Calu3 (cell line): ENCODE measurements at regions of chr11 and their contacts with region 1.

Region 1: GRCh38 chr11:37504060-37504611 is 906.1 kb upstream of the RAG2 start:
- DNase-seq: peak; percentile 62
- H3K4me3 Mint-ChIP-seq: peak overlapping the region; percentile 0
- H3K27ac Mint-ChIP-seq: peak overlapping the region; percentile 16
- H3K4me1 Mint-ChIP-seq: peaks cover 51% of the 10 kb centered on the region
- H3K27me3 Mint-ChIP-seq: no peaks in the 10 kb centered on the region
- CTCF ChIP-seq: no peak

Region 2: DNA sequence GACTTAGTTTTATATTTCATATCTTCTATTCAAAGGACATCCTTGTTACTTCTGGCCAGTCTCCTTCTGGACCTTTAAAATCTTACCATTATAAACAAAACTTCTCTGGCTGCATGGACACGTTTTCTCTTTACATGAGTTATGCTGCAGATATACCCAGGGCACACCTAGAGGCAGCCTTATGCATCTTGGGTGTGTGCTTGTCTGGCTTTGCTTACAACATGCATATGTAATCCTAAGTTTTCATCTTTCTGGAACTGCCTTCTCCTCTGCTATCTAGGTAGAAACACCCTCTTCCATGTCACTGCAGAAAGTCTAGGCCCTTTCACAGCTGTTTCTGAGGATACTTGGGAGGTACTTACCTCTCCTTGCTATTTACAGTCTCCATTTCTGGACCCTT is 720.3 kb before region 1 on chr11:
- CTCF ChIA-PET with region 1: interaction called, 18 read pairs
- intact Hi-C with region 1: no loop called
- DNase-seq: no peak
- H3K4me3 Mint-ChIP-seq: no peak overlapping the region
- H3K27ac Mint-ChIP-seq: no peak overlapping the region
- H3K4me1 Mint-ChIP-seq: no peaks in the 10 kb centered on the region
- H3K27me3 Mint-ChIP-seq: peaks cover 28% of the 10 kb centered on the region
- CTCF ChIP-seq: no peak

Region 3: DNA sequence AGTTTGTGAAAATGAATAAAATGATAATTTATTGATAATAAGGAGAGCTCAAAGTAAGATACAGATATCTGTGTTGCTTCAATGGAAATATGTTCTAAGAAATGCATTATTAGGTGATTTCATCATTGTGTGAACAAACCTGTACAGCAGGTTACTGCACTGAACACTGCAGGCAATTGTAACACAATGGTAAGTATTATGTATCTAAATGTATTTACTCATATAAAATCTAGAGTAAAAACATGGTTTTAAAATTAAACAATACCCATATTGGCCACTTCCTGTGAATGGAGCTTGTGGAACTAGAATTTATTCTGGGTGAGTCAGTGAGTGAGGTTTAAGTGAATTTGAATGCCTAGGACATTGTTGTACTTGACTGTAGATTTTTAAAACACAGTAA is 183.2 kb before region 1 on chr11:
- CTCF ChIA-PET with region 1: no interaction called
- intact Hi-C with region 1: loop called (anchors 10 kb)
- DNase-seq: peak; percentile 36
- H3K4me3 Mint-ChIP-seq: no peak overlapping the region
- H3K27ac Mint-ChIP-seq: peak overlapping the region; percentile 75
- H3K4me1 Mint-ChIP-seq: peaks cover 39% of the 10 kb centered on the region
- H3K27me3 Mint-ChIP-seq: no peaks in the 10 kb centered on the region
- CTCF ChIP-seq: no peak

Region 4: DNA sequence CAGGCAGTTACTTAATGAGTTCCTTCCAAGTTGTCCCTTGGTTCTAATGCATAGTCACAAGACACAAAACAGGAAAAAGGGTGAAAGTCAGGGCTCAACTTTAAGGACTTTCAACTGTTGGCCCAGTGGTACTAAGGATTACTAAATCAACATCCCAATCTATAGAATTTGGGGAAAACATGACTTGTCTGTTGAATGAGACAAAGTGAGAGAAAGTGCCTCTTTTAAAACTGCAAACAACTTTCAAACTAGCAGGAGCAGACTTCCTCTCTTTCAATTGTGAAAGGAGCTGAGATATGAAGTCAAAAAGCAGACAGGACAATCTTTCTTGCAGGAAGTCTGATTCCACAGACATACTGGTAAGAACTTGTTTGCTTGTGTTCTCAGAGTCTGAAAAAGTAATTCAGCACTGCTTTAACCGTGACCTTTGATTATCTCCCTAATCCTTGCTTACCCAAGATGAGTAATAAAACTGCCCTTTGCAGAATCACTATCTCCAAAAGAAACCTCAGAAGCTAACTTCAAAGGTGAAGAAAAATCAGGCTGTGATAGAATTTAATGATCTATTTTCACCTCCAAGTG is 54.6 kb after region 1 on chr11:
- CTCF ChIA-PET with region 1: no interaction called
- intact Hi-C with region 1: no loop called
- DNase-seq: no peak
- H3K4me3 Mint-ChIP-seq: no peak overlapping the region
- H3K27ac Mint-ChIP-seq: no peak overlapping the region
- H3K4me1 Mint-ChIP-seq: no peaks in the 10 kb centered on the region
- H3K27me3 Mint-ChIP-seq: no peaks in the 10 kb centered on the region
- CTCF ChIP-seq: no peak